SK-N-SH (cell line): ENCODE measurements at regions of chr20 and their contacts with region 1.

Region 1: DNA sequence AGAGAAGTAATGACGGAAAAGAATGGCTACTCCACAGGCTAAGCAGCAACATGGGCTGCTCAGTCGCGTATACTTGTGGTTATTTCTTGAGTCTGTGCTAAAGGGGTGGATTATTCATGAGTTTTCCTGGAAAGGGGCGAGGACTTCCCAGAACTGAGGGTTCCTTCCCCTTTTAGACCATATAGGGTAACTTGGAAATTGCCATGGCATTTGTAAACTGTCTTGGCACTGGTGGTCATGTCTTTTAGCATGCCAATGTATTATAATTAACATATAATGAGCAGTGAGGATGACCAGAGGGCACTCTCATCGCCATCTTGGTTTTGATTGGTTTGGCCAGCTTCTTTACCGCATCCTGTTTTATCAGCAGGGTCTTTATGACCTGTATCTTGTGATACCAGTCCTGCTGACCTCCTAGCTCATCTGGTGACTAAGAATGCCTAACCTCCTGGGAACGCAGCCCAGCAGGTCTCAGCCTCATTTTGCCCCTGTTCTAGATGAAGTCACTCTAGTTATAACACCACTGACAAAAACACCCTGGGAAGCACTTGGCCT is 11.4 kb downstream of the LBP start:
- DNase-seq: no peak
- H3K4me3 ChIP-seq: no peak overlapping the region
- H3K27ac ChIP-seq: no peak overlapping the region
- H3K4me1 ChIP-seq: no peaks in the 10 kb centered on the region
- H3K27me3 ChIP-seq: no peaks in the 10 kb centered on the region
- CTCF ChIP-seq: no peak
- EP300 ChIP-seq: no peak
- RAD21 ChIP-seq: no peak

Region 2: DNA sequence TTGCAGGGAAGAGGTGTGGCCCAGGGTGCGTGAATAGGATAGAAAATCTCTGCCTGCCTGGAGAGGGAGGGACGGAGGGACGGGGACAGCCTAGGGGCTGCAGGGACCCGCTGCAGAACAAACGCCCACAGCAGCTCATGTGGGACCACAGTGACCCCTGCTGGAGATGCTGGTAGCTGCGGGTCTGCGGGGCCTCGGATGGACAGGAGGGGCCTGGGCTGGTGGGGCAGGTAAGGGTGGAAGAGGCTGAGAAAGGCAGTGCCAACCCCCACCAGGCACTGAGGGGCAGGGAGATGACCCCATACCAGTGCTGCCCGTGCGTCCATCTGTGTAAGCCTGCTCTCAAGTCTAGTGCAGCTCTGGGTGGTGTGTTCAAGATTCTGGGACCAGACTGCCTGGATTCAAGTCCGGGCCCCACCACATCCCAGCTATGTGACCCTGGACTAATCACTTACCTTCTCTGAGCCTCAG is 136.6 kb before region 1 on chr20:
- CTCF ChIA-PET with region 1: no interaction called
- POLR2A ChIA-PET with region 1: no interaction called
- DNase-seq: peak; percentile 94
- H3K4me3 ChIP-seq: peak overlapping the region in 1 of 2 experiments; percentile 3; a peak in 2 of 4 replicates
- H3K27ac ChIP-seq: no peak overlapping the region
- H3K4me1 ChIP-seq: peaks cover 24 to 25% of the 10 kb centered on the region in 2 experiments; a peak in 3 of 4 replicates
- H3K27me3 ChIP-seq: no peaks in the 10 kb centered on the region
- CTCF ChIP-seq: peak; percentile 97
- EP300 ChIP-seq: no peak
- RAD21 ChIP-seq: peak; percentile 95

Region 3: DNA sequence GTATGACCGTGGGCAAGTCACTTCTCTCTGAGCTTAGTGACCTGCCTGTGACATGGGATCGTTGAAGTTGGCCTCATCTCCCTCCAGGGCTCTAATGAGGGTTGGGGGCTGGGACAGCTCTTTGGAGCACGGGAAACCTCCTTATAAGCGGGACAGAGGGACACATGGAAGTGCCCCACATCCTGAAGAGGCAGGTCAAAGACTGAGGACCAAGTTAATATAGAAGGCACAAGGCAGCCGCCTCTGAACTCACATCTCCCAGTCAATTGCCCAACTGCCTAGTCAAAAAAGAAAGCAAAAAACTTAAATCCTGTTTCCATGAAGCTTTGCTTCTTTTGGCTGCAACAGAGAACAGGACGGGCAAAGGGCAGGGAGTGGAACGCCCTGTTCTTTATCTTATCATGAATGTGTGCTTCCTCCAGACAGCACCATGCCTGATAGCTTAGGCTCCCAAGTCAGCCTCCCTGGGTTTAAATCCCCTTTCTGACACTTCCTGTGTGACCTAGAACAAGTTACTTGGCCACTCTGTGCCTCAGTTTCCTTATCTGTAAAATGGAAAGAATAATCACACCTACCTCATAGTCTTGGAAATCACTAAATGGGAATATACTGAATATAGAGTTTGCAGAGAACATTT is 15.6 kb after region 1 on chr20:
- CTCF ChIA-PET with region 1: interaction called, 15 read pairs
- POLR2A ChIA-PET with region 1: no interaction called
- DNase-seq: no peak
- H3K4me3 ChIP-seq: no peak overlapping the region
- H3K27ac ChIP-seq: no peak overlapping the region
- H3K4me1 ChIP-seq: no peaks in the 10 kb centered on the region
- H3K27me3 ChIP-seq: peaks cover 13% of the 10 kb centered on the region
- CTCF ChIP-seq: no peak
- EP300 ChIP-seq: no peak
- RAD21 ChIP-seq: no peak